Activated CD8-positive, alpha-beta memory T cell treated with anti-CD3 and anti-CD28 coated beads, Interleukin-2, amount 10 ng/mL, durations not matched to agents 7 days and 5 days (primary cell): ENCODE measurements at regions of chr2 and their contacts with region 1.

Region 1: GRCh38 chr2:46461011-46461674 is 18.2 kb upstream of the TMEM247 start:
- DNase-seq: peak; percentile 81
- ATAC-seq: peak; percentile 67
- H3K4me3 Mint-ChIP-seq: no peak overlapping the region
- H3K27ac Mint-ChIP-seq: peak overlapping the region; percentile 28
- H3K4me1 Mint-ChIP-seq: peaks cover 16% of the 10 kb centered on the region
- H3K27me3 Mint-ChIP-seq: no peaks in the 10 kb centered on the region

Region 2: GRCh38 chr2:46010925-46011490 is 450.1 kb before region 1 on chr2:
- CTCF ChIA-PET with region 1: interaction called, 16 read pairs
- DNase-seq: peak; percentile 39
- ATAC-seq: peak; percentile 85
- H3K4me3 Mint-ChIP-seq: no peak overlapping the region
- H3K27ac Mint-ChIP-seq: peak overlapping the region; percentile 22
- H3K4me1 Mint-ChIP-seq: peaks cover 51% of the 10 kb centered on the region
- H3K27me3 Mint-ChIP-seq: no peaks in the 10 kb centered on the region

Region 3: GRCh38 chr2:46416739-46417403 is 44.3 kb before region 1 on chr2:
- CTCF ChIA-PET with region 1: no interaction called
- DNase-seq: no peak
- ATAC-seq: no peak
- H3K4me3 Mint-ChIP-seq: no peak overlapping the region
- H3K27ac Mint-ChIP-seq: no peak overlapping the region
- H3K4me1 Mint-ChIP-seq: peaks cover 3% of the 10 kb centered on the region
- H3K27me3 Mint-ChIP-seq: peaks cover 3% of the 10 kb centered on the region